ENCODE measurements at regions of chr17 and their contacts with region 1.

Region 1: DNA sequence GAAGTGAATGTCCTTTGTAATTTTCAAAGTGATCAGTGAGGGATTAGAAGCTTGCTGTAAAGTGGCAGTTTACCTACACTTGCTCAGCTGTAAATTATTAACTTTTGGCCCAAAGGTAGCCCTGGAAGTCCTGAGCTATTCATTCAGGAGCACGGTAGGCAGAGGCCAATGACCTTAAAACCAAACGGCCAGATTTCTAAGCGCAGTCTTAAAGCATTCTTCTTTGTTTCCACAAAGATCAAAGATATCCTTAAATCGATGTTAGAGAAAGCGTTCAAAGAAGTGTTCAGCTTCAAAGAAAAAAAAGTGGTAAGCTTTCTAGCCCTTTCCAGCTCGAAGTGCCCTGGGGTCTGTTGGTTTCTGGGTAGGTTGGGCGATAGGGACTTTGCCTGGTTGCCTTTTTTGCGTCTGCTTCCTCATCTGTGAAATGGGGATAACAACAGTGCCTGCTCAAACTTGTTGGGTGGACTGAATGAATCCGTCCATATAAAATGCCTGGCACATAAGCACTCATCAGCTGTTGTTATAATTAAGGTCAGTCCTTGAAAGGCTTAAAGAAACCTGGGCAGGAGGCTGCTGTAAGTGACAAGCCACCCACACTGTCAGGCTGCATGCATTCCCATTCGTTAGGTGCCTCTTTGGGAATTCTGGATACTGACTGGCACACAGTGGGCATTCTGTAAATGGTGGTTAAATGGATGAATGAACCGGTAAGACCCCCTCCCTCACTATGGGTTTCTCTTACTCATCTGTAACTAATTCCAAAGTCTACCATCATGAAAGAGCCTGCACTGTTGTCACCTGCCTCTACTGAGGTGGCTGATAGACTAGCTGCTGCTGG is 113.2 kb downstream of the PRKCA start:
- DNase-seq: no peak
- ATAC-seq: peak; percentile 26
- H3K4me3 ChIP-seq: no peak overlapping the region
- H3K4me3 Mint-ChIP-seq: peak overlapping the region; percentile 59
- H3K27ac ChIP-seq: no peak overlapping the region
- H3K27ac Mint-ChIP-seq: peak overlapping the region; percentile 6
- H3K4me1 ChIP-seq: peaks cover 45% of the 10 kb centered on the region
- H3K4me1 Mint-ChIP-seq: peaks cover 54% of the 10 kb centered on the region
- H3K27me3 ChIP-seq: no peaks in the 10 kb centered on the region
- H3K27me3 Mint-ChIP-seq: no peaks in the 10 kb centered on the region
- CTCF ChIP-seq: no peak

Region 2: GRCh38 chr17:66397486-66397885 is 18.1 kb before region 1 on chr17:
- CTCF ChIA-PET with region 1: interaction called, 4 read pairs
- POLR2A ChIA-PET with region 1: interaction called, 5 read pairs
- intact Hi-C with region 1: loop called in 1 of 2 experiments (anchors 2 kb)
- DNase-seq: no peak
- ATAC-seq: peak; percentile 48
- H3K4me3 ChIP-seq: no peak overlapping the region
- H3K4me3 Mint-ChIP-seq: peak overlapping the region; percentile 64
- H3K27ac ChIP-seq: peak overlapping the region; percentile 12 to 40
- H3K27ac Mint-ChIP-seq: peak overlapping the region; percentile 89
- H3K4me1 ChIP-seq: peaks cover 43% of the 10 kb centered on the region
- H3K4me1 Mint-ChIP-seq: peaks cover 83% of the 10 kb centered on the region
- H3K27me3 ChIP-seq: no peaks in the 10 kb centered on the region
- H3K27me3 Mint-ChIP-seq: no peaks in the 10 kb centered on the region
- CTCF ChIP-seq: no peak